Thyroid gland (tissue), 4 donors: ENCODE measurements at regions of chr2 and their contacts with region 1.

Region 1: GRCh38 chr2:132547074-132547687 is 122.8 kb downstream of the LYPD1 start:
- DNase-seq: peak; percentile 71 to 79
- H3K4me3 ChIP-seq: no peak overlapping the region
- H3K27ac ChIP-seq: no peak overlapping the region
- H3K4me1 ChIP-seq: no peaks in the 10 kb centered on the region
- H3K27me3 ChIP-seq: no peaks in the 10 kb centered on the region
- CTCF ChIP-seq: peak in 5 of 6 experiments; percentile 50 to 64 (median 59)
- POLR2A ChIP-seq: no peak

Region 2: GRCh38 chr2:133171393-133172004 is 624.3 kb after region 1 on chr2:
- intact Hi-C with region 1: loop called (anchors 5 kb)
- DNase-seq: no peak
- H3K4me3 ChIP-seq: no peak overlapping the region
- H3K27ac ChIP-seq: no peak overlapping the region
- H3K4me1 ChIP-seq: no peaks in the 10 kb centered on the region
- H3K27me3 ChIP-seq: no peaks in the 10 kb centered on the region
- CTCF ChIP-seq: peak in 5 of 6 experiments; percentile 11 to 77 (median 59)
- POLR2A ChIP-seq: no peak